ENCODE measurements at regions of chr16 and their contacts with region 1.

Region 1: GRCh38 chr16:2500918-2501750 is 12.6 kb upstream of the ATP6V0C start:
- DNase-seq: peak; percentile 85
- ATAC-seq: peak; percentile 94
- H3K4me3 Mint-ChIP-seq: no peak overlapping the region
- H3K27ac Mint-ChIP-seq: no peak overlapping the region
- H3K4me1 Mint-ChIP-seq: no peaks in the 10 kb centered on the region
- H3K27me3 Mint-ChIP-seq: no peaks in the 10 kb centered on the region

Region 2: DNA sequence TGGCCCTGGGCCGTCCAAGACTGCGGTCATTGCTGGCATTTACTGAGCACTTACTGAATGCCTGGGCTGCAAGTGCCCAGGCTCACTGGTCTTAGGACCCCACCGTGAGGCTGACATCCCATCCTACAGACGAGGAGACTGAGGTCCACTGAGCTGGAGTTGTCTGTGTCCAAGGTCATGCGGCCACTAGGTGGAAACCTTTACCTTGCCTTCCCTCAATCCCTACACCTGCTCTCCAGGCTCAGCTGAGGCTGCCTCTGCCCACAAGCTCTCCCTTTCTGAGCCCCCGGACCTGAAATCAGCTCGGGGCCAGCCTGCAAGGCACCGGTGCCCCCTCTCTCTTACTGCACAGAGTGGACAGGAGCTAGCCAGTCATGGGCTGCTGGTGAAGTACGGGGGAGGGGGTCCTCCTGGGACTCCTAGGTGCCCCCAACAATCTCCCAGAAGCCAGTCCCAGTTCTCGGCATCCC is 306.2 kb before region 1 on chr16:
- CTCF ChIA-PET with region 1: interaction called, 20 read pairs
- POLR2A ChIA-PET with region 1: no interaction called
- DNase-seq: peak; percentile 67
- ATAC-seq: peak; percentile 70
- H3K4me3 Mint-ChIP-seq: no peak overlapping the region
- H3K27ac Mint-ChIP-seq: no peak overlapping the region
- H3K4me1 Mint-ChIP-seq: peaks cover 3% of the 10 kb centered on the region
- H3K27me3 Mint-ChIP-seq: peaks cover 40% of the 10 kb centered on the region

Region 3: GRCh38 chr16:2467521-2468151 is 33.5 kb before region 1 on chr16:
- CTCF ChIA-PET with region 1: interaction called, 10 read pairs
- POLR2A ChIA-PET with region 1: no interaction called
- DNase-seq: no peak
- ATAC-seq: peak; percentile 20
- H3K4me3 Mint-ChIP-seq: no peak overlapping the region
- H3K27ac Mint-ChIP-seq: no peak overlapping the region
- H3K4me1 Mint-ChIP-seq: peaks cover 4% of the 10 kb centered on the region
- H3K27me3 Mint-ChIP-seq: peaks cover 31% of the 10 kb centered on the region

Region 4: GRCh38 chr16:2486645-2487516 is 14.3 kb before region 1 on chr16:
- CTCF ChIA-PET with region 1: interaction called, 27 read pairs
- POLR2A ChIA-PET with region 1: no interaction called
- DNase-seq: peak; percentile 80
- ATAC-seq: peak; percentile 92
- H3K4me3 Mint-ChIP-seq: peak overlapping the region; percentile 22
- H3K27ac Mint-ChIP-seq: peak overlapping the region; percentile 65
- H3K4me1 Mint-ChIP-seq: peaks cover 27% of the 10 kb centered on the region
- H3K27me3 Mint-ChIP-seq: no peaks in the 10 kb centered on the region

Measured in activated CD8-positive, alpha-beta T cell treated with anti-CD3 and anti-CD28 coated beads, Interleukin-2, amount 10 ng/mL, durations not matched to agents 7 days and 5 days (primary cell).